Naive thymus-derived CD4-positive, alpha-beta T cell (primary cell): ENCODE measurements at regions of chr3 and their contacts with region 1.

Region 1: DNA sequence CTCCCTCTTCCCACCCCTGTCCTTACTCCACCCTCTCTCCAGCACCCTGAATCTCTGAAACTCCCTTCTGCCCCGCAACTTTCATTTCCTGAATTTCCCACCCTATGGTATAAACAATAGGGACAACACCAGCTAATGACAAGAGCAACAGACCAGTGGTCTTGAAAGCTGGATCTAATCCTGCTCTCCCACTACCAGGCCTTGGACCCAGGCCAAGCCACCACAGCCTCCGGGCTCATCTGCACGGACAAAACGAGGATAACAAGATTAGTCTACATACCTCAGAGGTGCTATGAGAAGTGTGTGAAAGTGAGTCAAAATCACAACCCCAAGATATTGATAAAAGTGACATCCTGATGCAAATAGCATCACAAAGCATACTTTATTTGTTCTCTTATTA is 128.6 kb downstream of the ERC2 start:
- DNase-seq: no peak
- ATAC-seq: no peak
- H3K4me3 ChIP-seq: no peak overlapping the region
- H3K4me3 Mint-ChIP-seq: no peak overlapping the region
- H3K27ac ChIP-seq: no peak overlapping the region
- H3K27ac Mint-ChIP-seq: no peak overlapping the region
- H3K4me1 ChIP-seq: no peaks in the 10 kb centered on the region
- H3K4me1 Mint-ChIP-seq: no peaks in the 10 kb centered on the region
- H3K27me3 ChIP-seq: no peaks in the 10 kb centered on the region
- H3K27me3 Mint-ChIP-seq: peaks cover 0 to 30% (median 11%) of the 10 kb centered on the region in 5 donors

Region 2: GRCh38 chr3:56323986-56324420 is 15.7 kb before region 1 on chr3:
- CTCF ChIA-PET with region 1: no interaction called
- POLR2A ChIA-PET with region 1: no interaction called
- intact Hi-C with region 1: no loop called
- DNase-seq: no peak
- ATAC-seq: no peak
- H3K4me3 ChIP-seq: no peak overlapping the region
- H3K4me3 Mint-ChIP-seq: no peak overlapping the region
- H3K27ac ChIP-seq: no peak overlapping the region
- H3K27ac Mint-ChIP-seq: no peak overlapping the region
- H3K4me1 ChIP-seq: no peaks in the 10 kb centered on the region
- H3K4me1 Mint-ChIP-seq: no peaks in the 10 kb centered on the region
- H3K27me3 ChIP-seq: no peaks in the 10 kb centered on the region
- H3K27me3 Mint-ChIP-seq: peaks cover 0 to 18% (median 9%) of the 10 kb centered on the region in 5 donors

Region 3: GRCh38 chr3:56389183-56389830 is 49.6 kb after region 1 on chr3:
- CTCF ChIA-PET with region 1: no interaction called
- POLR2A ChIA-PET with region 1: no interaction called
- intact Hi-C with region 1: no loop called
- DNase-seq: no peak
- ATAC-seq: no peak
- H3K4me3 ChIP-seq: no peak overlapping the region
- H3K4me3 Mint-ChIP-seq: no peak overlapping the region
- H3K27ac ChIP-seq: no peak overlapping the region
- H3K27ac Mint-ChIP-seq: no peak overlapping the region
- H3K4me1 ChIP-seq: no peaks in the 10 kb centered on the region
- H3K4me1 Mint-ChIP-seq: peaks cover 0 to 1% (median 0%) of the 10 kb centered on the region in 7 donors
- H3K27me3 ChIP-seq: no peaks in the 10 kb centered on the region
- H3K27me3 Mint-ChIP-seq: peaks cover 5 to 35% (median 27%) of the 10 kb centered on the region in 5 donors

Region 4: GRCh38 chr3:56547486-56547885 is 207.8 kb after region 1 on chr3:
- CTCF ChIA-PET with region 1: no interaction called
- POLR2A ChIA-PET with region 1: no interaction called
- intact Hi-C with region 1: loop called in 1 of 2 experiments (anchors 2 kb)
- DNase-seq: no peak
- ATAC-seq: no peak
- H3K4me3 ChIP-seq: no peak overlapping the region
- H3K4me3 Mint-ChIP-seq: no peak overlapping the region
- H3K27ac ChIP-seq: no peak overlapping the region
- H3K27ac Mint-ChIP-seq: no peak overlapping the region
- H3K4me1 ChIP-seq: no peaks in the 10 kb centered on the region
- H3K4me1 Mint-ChIP-seq: no peaks in the 10 kb centered on the region
- H3K27me3 ChIP-seq: no peaks in the 10 kb centered on the region
- H3K27me3 Mint-ChIP-seq: peaks cover 9 to 43% (median 13%) of the 10 kb centered on the region in 5 donors

Region 5: GRCh38 chr3:56825567-56826438 is 486.1 kb after region 1 on chr3:
- CTCF ChIA-PET with region 1: no interaction called
- POLR2A ChIA-PET with region 1: no interaction called
- intact Hi-C with region 1: no loop called
- DNase-seq: no peak
- ATAC-seq: no peak
- H3K4me3 ChIP-seq: no peak overlapping the region
- H3K4me3 Mint-ChIP-seq: no peak overlapping the region
- H3K27ac ChIP-seq: no peak overlapping the region
- H3K27ac Mint-ChIP-seq: peak overlapping the region in 5 of 9 donors; percentile 26 to 61 (median 30)
- H3K4me1 ChIP-seq: peaks cover 5 to 18% of the 10 kb centered on the region in 2 donors
- H3K4me1 Mint-ChIP-seq: peaks cover 31 to 64% (median 41%) of the 10 kb centered on the region in 7 donors
- H3K27me3 ChIP-seq: no peaks in the 10 kb centered on the region
- H3K27me3 Mint-ChIP-seq: no peaks in the 10 kb centered on the region